Keratinocyte (primary cell): ENCODE measurements at regions of chr9 and their contacts with region 1.

Region 1: GRCh38 chr9:17219261-17219660 is 84.4 kb downstream of the CNTLN start:
- DNase-seq: no peak
- H3K4me3 ChIP-seq: no peak overlapping the region
- H3K27ac ChIP-seq: no peak overlapping the region
- H3K4me1 ChIP-seq: peaks cover 3% of the 10 kb centered on the region
- H3K27me3 ChIP-seq: no peaks in the 10 kb centered on the region
- CTCF ChIP-seq: peak in 1 of 3 experiments; percentile 28

Region 2: GRCh38 chr9:17462869-17463464 is 243.7 kb after region 1 on chr9:
- dilution Hi-C with region 1: loop called (anchors 25 kb)
- DNase-seq: peak; percentile 5
- H3K4me3 ChIP-seq: no peak overlapping the region
- H3K27ac ChIP-seq: no peak overlapping the region
- H3K4me1 ChIP-seq: no peaks in the 10 kb centered on the region
- H3K27me3 ChIP-seq: no peaks in the 10 kb centered on the region
- CTCF ChIP-seq: peak in 2 of 3 experiments; percentile 43 to 59